Heart left ventricle (tissue), 16 donors: ENCODE measurements at regions of chr16 and their contacts with region 1.

Region 1: GRCh38 chr16:2720719-2721633 is 952 bp upstream of the PRSS27 start:
- DNase-seq: peak; percentile 83 to 91 (median 86)
- ATAC-seq: peak; percentile 68 to 92 (median 84)
- H3K4me3 ChIP-seq: peak overlapping the region; percentile 48 to 90 (median 66)
- H3K27ac ChIP-seq: peak overlapping the region in 11 of 12 donors; percentile 22 to 85 (median 74)
- H3K4me1 ChIP-seq: peaks cover 0 to 27% (median 13%) of the 10 kb centered on the region in 12 donors
- H3K27me3 ChIP-seq: peaks cover 0 to 8% (median 0%) of the 10 kb centered on the region in 9 donors
- CTCF ChIP-seq: peak; percentile 34 to 92 (median 80)
- POLR2A ChIP-seq: no peak

Region 2: GRCh38 chr16:2682209-2683021 is 38.6 kb before region 1 on chr16 and contains the start of gene KCTD5:
- intact Hi-C with region 1: loop called in 2 of 10 experiments (anchors 2 to 5 kb)
- DNase-seq: peak; percentile 96 to 98 (median 97)
- ATAC-seq: peak; percentile 95 to 97 (median 96)
- H3K4me3 ChIP-seq: peak within 1 kb of the TSS; percentile 57 to 100 (median 90)
- H3K27ac ChIP-seq: peak within 1 kb of the TSS; percentile 63 to 94 (median 88)
- H3K4me1 ChIP-seq: peaks cover 0 to 32% (median 17%) of the 10 kb centered on the region in 12 donors
- H3K27me3 ChIP-seq: no peaks in the 10 kb centered on the region
- CTCF ChIP-seq: peak in 1 of 12 donors; percentile 16
- POLR2A ChIP-seq: peak; percentile 18 to 89
- total RNA-seq, gene KCTD5: 9.1 to 24.3 (median 11.1) TPM

Region 3: GRCh38 chr16:2784951-2785635 is 64.1 kb after region 1 on chr16:
- intact Hi-C with region 1: no loop called
- DNase-seq: peak in 2 of 5 donors; percentile 16 to 21
- ATAC-seq: peak in 2 of 4 donors; percentile 27 to 31
- H3K4me3 ChIP-seq: peak overlapping the region in 11 of 12 donors; percentile 14 to 56 (median 36)
- H3K27ac ChIP-seq: no peak overlapping the region
- H3K4me1 ChIP-seq: peaks cover 0 to 12% (median 1%) of the 10 kb centered on the region in 12 donors
- H3K27me3 ChIP-seq: peaks cover 17 to 48% (median 39%) of the 10 kb centered on the region in 9 donors
- CTCF ChIP-seq: no peak
- POLR2A ChIP-seq: no peak